K562 (cell line): ENCODE measurements at regions of chr17 and their contacts with region 1.

Region 1: DNA sequence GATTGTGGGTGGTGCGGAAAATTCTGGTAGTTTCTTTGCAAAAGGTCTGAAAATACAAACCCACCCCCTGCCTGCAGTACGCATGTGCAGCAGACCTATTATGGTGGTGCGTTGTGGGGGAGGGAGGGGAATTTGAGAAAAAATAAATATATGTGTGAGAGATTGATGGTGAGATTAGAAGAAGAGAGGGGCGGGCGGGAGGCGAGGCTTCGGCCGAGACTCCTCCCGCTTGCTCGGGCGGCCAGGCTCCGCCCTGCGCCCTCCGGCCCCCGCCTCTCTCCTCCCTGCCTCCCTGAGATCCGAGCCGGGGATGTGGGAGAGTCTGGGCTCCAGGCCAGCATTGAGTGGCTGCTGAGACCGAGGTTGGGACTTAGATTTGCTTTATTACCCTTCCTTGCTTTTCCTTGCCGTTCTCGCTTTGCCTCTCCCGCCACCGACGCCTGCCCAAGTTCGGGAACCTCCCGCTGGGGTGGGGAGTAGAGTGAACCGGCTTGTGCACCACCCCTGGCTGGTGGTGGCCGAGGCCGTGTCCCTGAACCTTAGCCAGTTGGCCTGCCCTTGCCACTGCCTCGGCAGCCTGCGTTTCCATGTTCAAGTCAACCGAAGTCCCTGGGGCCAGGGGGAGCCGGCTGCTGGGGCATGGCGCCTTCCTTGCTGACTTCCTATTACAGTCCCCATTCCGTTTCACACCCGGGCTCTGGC is 956 bp upstream of the CHD3 start:
- DNase-seq: peak; percentile 81 to 92 (median 88)
- ATAC-seq: peak; percentile 91
- H3K4me3 ChIP-seq: peak overlapping the region; percentile 66
- H3K27ac ChIP-seq: peak overlapping the region; percentile 97
- H3K4me1 ChIP-seq: peaks cover 21 to 31% of the 10 kb centered on the region in 2 experiments; a peak in 4 of 5 replicates
- H3K27me3 ChIP-seq: no peaks in the 10 kb centered on the region
- CTCF ChIP-seq: no peak
- EP300 ChIP-seq: no peak
- POLR2A ChIP-seq: no peak
- RAD21 ChIP-seq: no peak

Region 2: GRCh38 chr17:7593296-7593695 is 294.3 kb before region 1 on chr17:
- CTCF ChIA-PET with region 1: no interaction called
- POLR2A ChIA-PET with region 1: no interaction called
- in situ Hi-C with region 1: no loop called
- intact Hi-C with region 1: no loop called
- DNase-seq: no peak
- ATAC-seq: no peak
- H3K4me3 ChIP-seq: no peak overlapping the region
- H3K27ac ChIP-seq: no peak overlapping the region
- H3K4me1 ChIP-seq: peaks cover 4 to 18% of the 10 kb centered on the region in 2 experiments; a peak in 2 of 5 replicates
- H3K27me3 ChIP-seq: no peaks in the 10 kb centered on the region
- CTCF ChIP-seq: no peak
- EP300 ChIP-seq: no peak
- POLR2A ChIP-seq: no peak
- RAD21 ChIP-seq: no peak

Region 3: DNA sequence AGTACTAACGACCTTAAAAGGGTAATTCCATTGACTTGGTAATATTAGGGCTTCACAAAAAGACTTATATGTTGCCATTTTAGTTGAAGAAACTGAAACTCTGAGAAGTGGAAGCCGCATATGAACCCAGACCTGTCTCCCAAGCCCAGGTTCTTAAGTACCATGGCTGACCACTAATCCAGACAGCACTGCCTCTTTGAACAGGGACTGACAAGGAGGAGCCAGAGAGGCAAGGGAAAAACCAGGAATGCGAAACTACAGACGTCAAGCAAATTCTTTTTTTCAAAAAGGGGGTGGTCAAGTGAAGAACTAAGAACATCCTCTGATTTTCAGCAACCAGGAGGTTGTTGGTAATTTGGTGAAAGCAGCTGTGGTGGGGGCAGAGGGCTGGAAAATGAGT is 14.6 kb before region 1 on chr17:
- CTCF ChIA-PET with region 1: no interaction called
- POLR2A ChIA-PET with region 1: interaction called, 13 read pairs
- in situ Hi-C with region 1: no loop called
- intact Hi-C with region 1: no loop called
- DNase-seq: no peak
- ATAC-seq: no peak
- H3K4me3 ChIP-seq: no peak overlapping the region
- H3K27ac ChIP-seq: no peak overlapping the region
- H3K4me1 ChIP-seq: no peaks in the 10 kb centered on the region
- H3K27me3 ChIP-seq: no peaks in the 10 kb centered on the region
- CTCF ChIP-seq: no peak
- EP300 ChIP-seq: no peak
- POLR2A ChIP-seq: no peak
- RAD21 ChIP-seq: no peak

Region 4: GRCh38 chr17:7927596-7927995 is 40.0 kb after region 1 on chr17:
- CTCF ChIA-PET with region 1: no interaction called
- POLR2A ChIA-PET with region 1: no interaction called
- in situ Hi-C with region 1: no loop called
- intact Hi-C with region 1: no loop called
- DNase-seq: no peak
- ATAC-seq: no peak
- H3K4me3 ChIP-seq: no peak overlapping the region
- H3K27ac ChIP-seq: no peak overlapping the region
- H3K4me1 ChIP-seq: peaks cover 0 to 18% of the 10 kb centered on the region in 2 experiments; a peak in 3 of 5 replicates
- H3K27me3 ChIP-seq: no peaks in the 10 kb centered on the region
- CTCF ChIP-seq: no peak
- EP300 ChIP-seq: no peak
- POLR2A ChIP-seq: no peak
- RAD21 ChIP-seq: no peak

Region 5: DNA sequence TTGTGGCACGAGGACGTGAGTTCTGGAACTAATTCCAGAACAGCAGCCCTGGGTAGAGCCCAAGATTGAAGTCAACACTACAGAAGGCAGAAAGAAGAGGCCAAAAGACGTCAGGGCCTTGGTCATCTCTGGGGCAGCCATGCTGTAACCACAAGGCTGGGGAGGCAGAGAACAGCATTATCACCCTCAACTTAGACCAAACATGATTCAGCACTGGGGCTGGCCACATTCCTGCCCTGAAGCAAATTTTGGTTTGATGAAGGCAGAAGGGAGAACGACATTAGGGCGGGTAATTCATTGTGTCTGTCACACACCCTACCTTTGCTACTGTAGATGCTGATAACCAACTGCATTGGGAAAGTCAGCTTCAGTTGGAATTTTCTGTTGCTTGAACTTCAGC is 141.5 kb after region 1 on chr17:
- CTCF ChIA-PET with region 1: no interaction called
- POLR2A ChIA-PET with region 1: no interaction called
- in situ Hi-C with region 1: no loop called
- intact Hi-C with region 1: no loop called
- DNase-seq: no peak
- ATAC-seq: no peak; the same call in 2 of the 3 replicates
- H3K4me3 ChIP-seq: no peak overlapping the region
- H3K27ac ChIP-seq: no peak overlapping the region
- H3K4me1 ChIP-seq: no peaks in the 10 kb centered on the region; a peak in 1 of 5 replicates
- H3K27me3 ChIP-seq: peaks cover 0 to 14% of the 10 kb centered on the region in 2 experiments; a peak in 2 of 5 replicates
- CTCF ChIP-seq: no peak
- EP300 ChIP-seq: no peak
- POLR2A ChIP-seq: no peak
- RAD21 ChIP-seq: no peak